Activated naive CD8-positive, alpha-beta T cell treated with anti-CD3 and anti-CD28 coated beads, Interleukin-2, amount 10 ng/mL, durations not matched to agents 7 days and 5 days (primary cell): ENCODE measurements at regions of chr12 and their contacts with region 1.

Region 1: GRCh38 chr12:120292661-120293531 is at the start of gene RNU4-1:
- DNase-seq: peak; percentile 62
- ATAC-seq: peak; percentile 40
- H3K4me3 Mint-ChIP-seq: no peak within 1 kb of the TSS
- H3K27ac Mint-ChIP-seq: no peak within 1 kb of the TSS
- H3K4me1 Mint-ChIP-seq: peaks cover 5% of the 10 kb centered on the region
- H3K27me3 Mint-ChIP-seq: no peaks in the 10 kb centered on the region
- total RNA-seq, gene RNU4-1: 1,307 to 1,401 TPM

Region 2: DNA sequence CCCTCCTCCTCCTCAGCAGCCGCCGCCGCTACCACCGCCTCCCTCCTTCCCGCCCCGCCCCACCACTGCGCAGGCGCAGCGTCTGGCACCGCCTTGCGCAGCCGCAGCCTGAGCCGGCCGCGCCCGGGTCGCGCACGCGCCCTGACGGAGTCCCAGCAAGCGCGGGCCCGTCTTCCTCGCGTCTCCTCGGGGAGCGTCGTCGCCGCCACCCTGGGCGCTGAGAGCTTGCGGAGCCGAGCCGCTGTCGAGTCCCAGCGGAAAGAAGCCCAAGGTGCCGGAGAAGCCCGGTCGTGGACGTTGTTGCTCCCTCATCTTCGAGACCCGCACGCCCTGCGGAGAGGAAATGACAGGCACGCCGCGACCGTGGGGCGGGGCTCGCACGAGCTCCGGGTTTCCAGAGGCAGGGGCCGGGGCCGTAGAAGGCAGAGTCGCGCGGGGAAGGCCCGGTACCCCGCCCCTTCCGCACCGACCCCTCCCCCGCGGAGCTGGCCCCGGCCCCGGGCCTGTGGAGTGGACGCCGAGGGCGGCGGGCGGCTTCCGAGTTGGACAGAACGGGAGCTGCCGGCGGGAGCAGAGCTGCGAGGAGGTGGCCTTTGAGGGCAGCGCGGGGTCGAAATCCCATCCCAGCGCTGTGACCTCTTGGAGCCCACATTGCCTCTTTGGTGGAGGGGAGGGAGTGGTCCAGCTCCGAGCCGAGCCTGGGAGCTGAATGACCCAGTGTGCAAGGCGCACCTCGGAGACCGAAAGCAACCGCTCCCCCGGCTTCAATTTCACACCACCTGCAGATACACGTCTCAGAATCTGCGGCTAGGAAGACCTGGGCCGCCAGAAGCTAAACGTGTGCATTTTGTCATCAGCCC is 175.9 kb before region 1 on chr12:
- POLR2A ChIA-PET with region 1: interaction called, 32 read pairs
- DNase-seq: peak; percentile 100
- ATAC-seq: peak; percentile 86
- H3K4me3 Mint-ChIP-seq: peak overlapping the region; percentile 96
- H3K27ac Mint-ChIP-seq: peak overlapping the region; percentile 89
- H3K4me1 Mint-ChIP-seq: peaks cover 61% of the 10 kb centered on the region
- H3K27me3 Mint-ChIP-seq: no peaks in the 10 kb centered on the region

Region 3: DNA sequence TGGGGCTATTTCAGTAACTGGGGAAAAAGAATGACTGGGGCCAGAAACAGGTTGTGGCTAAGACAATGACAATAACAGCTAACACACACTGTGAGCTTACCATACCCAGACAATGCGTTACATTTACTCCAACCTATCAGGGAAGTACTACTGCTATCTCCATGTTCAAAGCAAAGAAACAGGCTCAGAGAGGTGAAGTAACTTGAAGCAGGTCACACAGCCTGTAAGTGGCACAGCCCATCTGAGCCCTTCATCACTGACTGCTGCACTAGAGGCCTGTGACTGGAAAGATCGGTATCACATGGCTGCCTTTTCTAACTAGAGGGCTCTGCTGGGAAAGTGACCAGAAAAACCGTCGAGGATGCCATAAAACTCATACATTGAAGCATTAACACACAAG is 106.2 kb before region 1 on chr12:
- POLR2A ChIA-PET with region 1: no interaction called
- DNase-seq: no peak
- ATAC-seq: no peak
- H3K4me3 Mint-ChIP-seq: no peak overlapping the region
- H3K27ac Mint-ChIP-seq: no peak overlapping the region
- H3K4me1 Mint-ChIP-seq: peaks cover 7% of the 10 kb centered on the region
- H3K27me3 Mint-ChIP-seq: no peaks in the 10 kb centered on the region

Region 4: DNA sequence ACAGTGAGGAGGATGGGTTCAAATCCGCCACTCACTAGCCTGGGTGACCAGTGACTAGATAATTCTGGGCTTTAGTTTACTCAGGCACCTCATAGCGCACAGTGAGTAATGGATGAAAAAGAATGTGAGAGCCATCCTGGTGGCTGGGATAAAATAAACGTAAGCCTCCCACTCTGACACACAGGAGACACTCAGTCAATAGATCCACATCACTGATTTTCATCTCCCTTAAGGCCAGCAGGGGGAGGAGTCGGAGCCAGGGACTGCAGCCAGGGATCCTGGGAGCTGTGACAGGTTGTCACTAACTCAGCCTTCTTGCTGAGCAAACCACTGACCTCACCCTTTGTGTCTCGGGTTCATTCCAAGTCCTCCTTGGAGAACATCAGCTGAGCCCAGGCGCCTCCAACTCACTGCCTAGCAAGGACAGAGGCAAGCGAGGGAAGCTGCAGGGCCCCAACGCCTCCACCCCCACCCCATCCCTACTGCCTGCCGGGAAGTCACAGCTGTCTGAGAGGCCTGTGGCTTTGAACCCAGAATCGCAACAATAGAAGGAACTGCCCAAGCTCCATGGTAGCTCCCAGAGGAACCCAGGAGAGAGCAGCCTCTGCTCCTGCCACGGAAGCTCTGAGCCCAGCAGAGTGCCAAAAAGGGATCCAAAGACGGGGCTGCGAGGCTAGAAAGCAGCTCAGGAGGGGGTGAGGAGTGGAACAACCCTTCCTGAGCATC is 58.1 kb before region 1 on chr12:
- POLR2A ChIA-PET with region 1: interaction called, 199 read pairs
- DNase-seq: no peak
- ATAC-seq: no peak
- H3K4me3 Mint-ChIP-seq: no peak overlapping the region
- H3K27ac Mint-ChIP-seq: no peak overlapping the region
- H3K4me1 Mint-ChIP-seq: peaks cover 47% of the 10 kb centered on the region
- H3K27me3 Mint-ChIP-seq: no peaks in the 10 kb centered on the region

Region 5: GRCh38 chr12:120257041-120257821 is 35.7 kb before region 1 on chr12:
- POLR2A ChIA-PET with region 1: interaction called, 128 read pairs
- DNase-seq: no peak
- ATAC-seq: no peak
- H3K4me3 Mint-ChIP-seq: no peak overlapping the region
- H3K27ac Mint-ChIP-seq: no peak overlapping the region
- H3K4me1 Mint-ChIP-seq: peaks cover 58% of the 10 kb centered on the region
- H3K27me3 Mint-ChIP-seq: no peaks in the 10 kb centered on the region

Region 6: GRCh38 chr12:120317224-120318105 is 24.6 kb after region 1 on chr12:
- POLR2A ChIA-PET with region 1: interaction called, 48 read pairs
- DNase-seq: peak; percentile 100
- ATAC-seq: peak; percentile 100
- H3K4me3 Mint-ChIP-seq: peak overlapping the region; percentile 90
- H3K27ac Mint-ChIP-seq: peak overlapping the region; percentile 81
- H3K4me1 Mint-ChIP-seq: peaks cover 8% of the 10 kb centered on the region
- H3K27me3 Mint-ChIP-seq: no peaks in the 10 kb centered on the region

Region 7: DNA sequence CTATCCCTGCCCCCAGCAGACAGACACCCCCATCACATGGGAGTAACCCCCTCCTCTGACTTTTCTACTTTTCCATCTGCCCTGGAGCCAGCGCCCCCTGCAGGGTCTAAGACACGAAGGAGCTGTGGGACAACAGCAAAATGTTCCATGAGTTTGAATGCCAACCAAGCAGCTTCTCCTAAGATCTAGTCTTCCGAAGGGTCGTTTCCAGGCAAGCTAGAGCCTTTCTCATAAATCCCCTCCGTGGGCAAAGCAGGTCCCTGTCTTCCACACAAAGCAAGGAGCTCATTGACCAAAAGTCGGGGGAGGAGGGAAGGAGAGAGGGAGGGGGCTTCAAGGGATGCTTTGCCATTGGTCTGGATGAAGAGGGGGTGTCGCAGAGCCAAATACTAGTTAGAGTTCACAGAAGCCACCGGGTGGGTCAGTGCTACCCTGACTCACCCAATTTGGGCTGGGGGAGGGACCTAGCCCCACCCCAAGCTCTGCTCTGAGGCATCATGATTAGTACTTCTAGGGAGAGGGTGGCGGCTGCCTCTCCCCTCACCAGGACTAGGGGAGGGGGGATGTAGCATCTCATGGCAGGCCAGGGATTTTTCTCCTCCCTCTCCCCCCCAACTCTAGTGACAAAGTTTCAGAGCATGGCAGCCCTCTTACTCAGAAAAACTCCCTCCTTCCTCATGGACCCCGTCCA is 74.5 kb after region 1 on chr12:
- POLR2A ChIA-PET with region 1: no interaction called
- DNase-seq: no peak
- ATAC-seq: no peak
- H3K4me3 Mint-ChIP-seq: peak overlapping the region; percentile 21
- H3K27ac Mint-ChIP-seq: no peak overlapping the region
- H3K4me1 Mint-ChIP-seq: no peaks in the 10 kb centered on the region
- H3K27me3 Mint-ChIP-seq: peaks cover 75% of the 10 kb centered on the region

Region 8: GRCh38 chr12:120402217-120402616 is 109.3 kb after region 1 on chr12:
- POLR2A ChIA-PET with region 1: no interaction called
- DNase-seq: no peak
- ATAC-seq: no peak
- H3K4me3 Mint-ChIP-seq: no peak overlapping the region
- H3K27ac Mint-ChIP-seq: no peak overlapping the region
- H3K4me1 Mint-ChIP-seq: no peaks in the 10 kb centered on the region
- H3K27me3 Mint-ChIP-seq: peaks cover 19% of the 10 kb centered on the region

Region 9: GRCh38 chr12:120528861-120529525 is 236.1 kb after region 1 on chr12 and contains the start of gene COQ5:
- POLR2A ChIA-PET with region 1: interaction called, 13 read pairs
- DNase-seq: peak; percentile 87
- ATAC-seq: peak; percentile 95
- H3K4me3 Mint-ChIP-seq: peak within 1 kb of the TSS; percentile 100
- H3K27ac Mint-ChIP-seq: peak within 1 kb of the TSS; percentile 99
- H3K4me1 Mint-ChIP-seq: peaks cover 18% of the 10 kb centered on the region
- H3K27me3 Mint-ChIP-seq: no peaks in the 10 kb centered on the region
- total RNA-seq, gene COQ5: 24.6 to 25.2 TPM